ENCODE measurements at regions of chrX and their contacts with region 1.

Region 1: DNA sequence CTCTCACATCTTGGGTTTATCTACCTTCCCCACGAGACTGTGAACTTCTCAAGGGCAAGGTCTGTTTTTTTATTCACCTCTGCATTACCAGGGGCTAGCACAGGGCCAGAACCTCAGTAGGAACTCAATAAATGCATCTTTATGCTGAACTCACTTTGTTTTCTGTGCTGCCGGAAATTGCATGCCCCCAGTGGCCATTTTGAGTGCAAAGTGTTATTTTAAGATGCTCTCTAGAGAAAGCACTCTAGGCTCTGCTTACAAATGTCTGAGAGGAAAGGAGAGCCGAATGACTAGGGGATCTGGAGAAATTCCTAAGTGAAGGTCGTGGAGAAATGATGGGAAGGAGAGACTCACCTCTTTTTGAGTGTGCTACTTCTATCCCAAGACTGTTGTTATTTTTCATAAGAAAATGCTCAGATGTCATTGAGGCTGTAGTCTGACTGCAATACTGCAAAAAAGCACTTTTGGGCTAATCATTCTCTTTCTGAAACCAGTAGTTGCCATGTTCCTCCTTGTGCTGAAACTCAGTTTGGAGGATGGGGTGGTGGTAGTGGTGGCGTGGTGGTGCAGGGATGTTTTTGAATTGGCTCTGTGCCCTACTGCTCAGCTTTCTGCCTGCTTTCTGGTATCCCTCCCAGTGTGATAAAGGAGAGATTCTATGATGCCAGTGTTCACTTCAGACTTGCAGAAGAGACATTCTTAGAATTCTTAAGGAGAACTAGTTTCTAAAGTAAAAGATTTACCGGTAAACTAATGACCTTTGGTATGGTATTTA is 41.3 kb downstream of the DOCK11 start:
- DNase-seq: peak; percentile 33
- ATAC-seq: peak; percentile 87
- H3K4me3 ChIP-seq: peak overlapping the region; percentile 31
- H3K27ac ChIP-seq: peak overlapping the region; percentile 85
- H3K4me1 ChIP-seq: peaks cover 8% of the 10 kb centered on the region
- H3K27me3 ChIP-seq: no peaks in the 10 kb centered on the region
- CTCF ChIP-seq: peak; percentile 34 to 55 (median 51)
- EP300 ChIP-seq: no peak
- POLR2A ChIP-seq: no peak
- RAD21 ChIP-seq: 0 out of 2 replicates have a peak, but pooled peaks have one; percentile 20

Region 2: GRCh38 chrX:118345401-118346257 is 191.2 kb before region 1 on chrX and contains the start of gene WDR44:
- CTCF ChIA-PET with region 1: no interaction called
- POLR2A ChIA-PET with region 1: no interaction called
- RAD21 ChIA-PET with region 1: no interaction called
- SMC1A ChIA-PET with region 1: interaction called, 6 read pairs
- in situ Hi-C with region 1: no loop called
- intact Hi-C with region 1: loop called (anchors 5 kb)
- DNase-seq: peak; percentile 82
- ATAC-seq: peak; percentile 89
- H3K4me3 ChIP-seq: peak within 1 kb of the TSS; percentile 73
- H3K27ac ChIP-seq: peak within 1 kb of the TSS; percentile 81
- H3K4me1 ChIP-seq: peaks cover 5% of the 10 kb centered on the region; the same call in 1 of the 2 replicates
- H3K27me3 ChIP-seq: no peaks in the 10 kb centered on the region
- CTCF ChIP-seq: no peak
- EP300 ChIP-seq: no peak
- POLR2A ChIP-seq: peak; percentile 86
- RAD21 ChIP-seq: no peak
- polyA plus RNA-seq, gene WDR44: 3.4 to 4.2 TPM

Region 3: DNA sequence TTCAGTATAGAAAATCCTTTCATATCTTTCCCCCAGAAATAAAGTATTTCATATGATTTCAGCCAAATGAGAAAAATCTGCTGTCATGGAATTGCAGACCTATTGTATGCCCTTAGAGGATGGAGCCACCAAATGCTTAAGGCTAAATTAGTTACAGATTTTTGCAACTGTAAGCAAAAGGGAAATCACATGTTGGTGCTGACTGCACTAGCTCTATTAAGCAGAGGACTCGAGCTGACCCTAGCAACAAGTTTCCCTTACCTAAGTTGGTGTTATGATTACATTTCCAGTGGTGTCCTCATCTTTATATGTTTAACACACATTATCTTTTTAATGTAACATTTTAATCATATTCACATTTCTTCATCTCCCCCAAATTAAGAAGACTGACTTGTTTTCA is 99.6 kb before region 1 on chrX:
- CTCF ChIA-PET with region 1: no interaction called
- POLR2A ChIA-PET with region 1: no interaction called
- RAD21 ChIA-PET with region 1: no interaction called
- SMC1A ChIA-PET with region 1: no interaction called
- in situ Hi-C with region 1: no loop called
- intact Hi-C with region 1: no loop called
- DNase-seq: no peak
- ATAC-seq: no peak
- H3K4me3 ChIP-seq: no peak overlapping the region
- H3K27ac ChIP-seq: no peak overlapping the region
- H3K4me1 ChIP-seq: no peaks in the 10 kb centered on the region
- H3K27me3 ChIP-seq: no peaks in the 10 kb centered on the region
- CTCF ChIP-seq: no peak
- EP300 ChIP-seq: no peak
- POLR2A ChIP-seq: no peak
- RAD21 ChIP-seq: no peak

Region 4: DNA sequence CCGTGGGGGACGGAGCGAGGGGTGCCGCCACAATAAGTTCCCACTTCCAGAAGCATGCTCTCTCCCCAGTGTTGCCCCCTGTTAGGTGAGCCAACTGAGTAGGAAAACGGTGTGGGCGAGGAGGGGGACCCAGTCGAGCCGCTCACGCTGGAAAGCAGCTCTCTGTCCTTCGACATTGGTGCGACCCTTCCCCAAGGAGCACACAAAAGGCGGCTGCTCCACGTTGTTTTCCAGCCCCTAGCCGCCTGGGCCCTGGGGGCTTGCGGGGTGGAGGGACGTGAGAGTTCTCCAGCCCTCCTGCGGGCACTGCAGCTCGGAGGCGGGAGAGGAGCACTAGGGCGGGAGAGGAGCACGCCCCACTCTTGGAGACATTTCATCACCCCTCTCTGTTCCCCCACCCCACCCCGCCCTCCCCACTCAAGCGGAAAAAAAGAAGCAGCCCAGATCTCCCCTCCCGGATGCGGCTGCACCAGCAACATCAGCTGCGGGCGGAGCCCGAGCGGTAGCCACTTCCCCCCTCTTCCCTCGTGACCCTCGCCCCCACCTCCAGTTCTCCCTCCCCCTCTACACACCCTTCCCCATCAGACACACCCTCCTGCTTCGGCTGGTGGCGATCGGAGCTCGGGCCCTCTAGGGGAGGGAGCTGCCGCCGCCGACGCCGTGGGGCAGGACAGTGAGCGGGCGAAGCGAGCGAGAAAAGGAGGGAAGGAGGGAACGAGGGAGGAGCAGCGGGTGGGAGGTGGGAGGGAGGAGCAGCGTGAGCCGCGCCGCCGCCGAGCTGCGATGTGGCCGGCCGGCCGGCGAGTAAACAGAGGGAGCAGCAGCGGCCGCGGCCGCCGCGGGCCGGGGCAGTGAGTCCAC is 41.6 kb before region 1 on chrX and contains the start of gene DOCK11:
- CTCF ChIA-PET with region 1: interaction called, 7 read pairs
- POLR2A ChIA-PET with region 1: interaction called, 39 read pairs
- RAD21 ChIA-PET with region 1: interaction called, 16 read pairs
- SMC1A ChIA-PET with region 1: interaction called, 24 read pairs
- in situ Hi-C with region 1: no loop called
- intact Hi-C with region 1: loop called (anchors 2 kb)
- DNase-seq: peak; percentile 58
- ATAC-seq: peak; percentile 84
- H3K4me3 ChIP-seq: peak within 1 kb of the TSS; percentile 74
- H3K27ac ChIP-seq: peak within 1 kb of the TSS; percentile 66
- H3K4me1 ChIP-seq: 0 out of 2 replicates have a peak, but pooled peaks cover 3% of the 10 kb centered on the region
- H3K27me3 ChIP-seq: no peaks in the 10 kb centered on the region
- CTCF ChIP-seq: no peak
- EP300 ChIP-seq: no peak
- POLR2A ChIP-seq: peak; percentile 82
- RAD21 ChIP-seq: no peak
- polyA plus RNA-seq, gene DOCK11: 17.3 to 27.7 TPM

Measured in GM12878 (cell line).